ENCODE measurements at regions of chr9 and their contacts with region 1.

Region 1: GRCh38 chr9:6715755-6716643 is 41.8 kb upstream of the KDM4C start:
- DNase-seq: peak; percentile 71
- ATAC-seq: peak; percentile 86
- H3K4me3 Mint-ChIP-seq: peak overlapping the region; percentile 90
- H3K27ac Mint-ChIP-seq: peak overlapping the region; percentile 92
- H3K4me1 Mint-ChIP-seq: peaks cover 13% of the 10 kb centered on the region
- H3K27me3 Mint-ChIP-seq: no peaks in the 10 kb centered on the region
- CTCF ChIP-seq: no peak

Region 2: GRCh38 chr9:6686396-6686795 is 29.6 kb before region 1 on chr9:
- CTCF ChIA-PET with region 1: interaction called, 3 read pairs
- POLR2A ChIA-PET with region 1: interaction called, 53 read pairs
- intact Hi-C with region 1: loop called (anchors 1 kb)
- DNase-seq: no peak
- ATAC-seq: no peak
- H3K4me3 Mint-ChIP-seq: peak overlapping the region; percentile 50
- H3K27ac Mint-ChIP-seq: peak overlapping the region; percentile 84
- H3K4me1 Mint-ChIP-seq: peaks cover 75% of the 10 kb centered on the region
- H3K27me3 Mint-ChIP-seq: no peaks in the 10 kb centered on the region
- CTCF ChIP-seq: no peak

Region 3: DNA sequence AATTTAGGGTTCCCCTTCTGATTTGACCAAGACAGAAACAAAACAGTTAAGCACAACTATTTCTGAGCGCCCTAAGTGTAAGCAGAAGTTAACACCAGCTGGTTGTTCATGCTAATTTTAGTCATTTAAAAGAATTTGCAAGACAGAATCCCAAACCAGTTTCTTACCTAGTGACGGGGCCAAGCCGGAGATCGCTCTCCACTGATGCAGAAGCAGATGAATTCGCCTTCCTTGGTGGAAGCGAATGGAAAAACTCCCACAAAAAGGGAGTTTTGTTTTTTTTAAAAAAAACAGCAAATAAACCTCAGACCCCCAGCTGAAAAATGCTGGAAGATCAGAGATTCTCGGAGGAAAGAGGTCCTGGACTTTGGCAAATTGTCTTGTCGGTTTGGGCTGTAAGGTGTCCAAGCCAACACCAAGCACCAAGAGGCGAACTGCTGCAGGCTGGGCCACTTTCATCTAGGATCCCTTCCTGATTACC is 23.1 kb before region 1 on chr9:
- CTCF ChIA-PET with region 1: no interaction called
- POLR2A ChIA-PET with region 1: interaction called, 25 read pairs
- intact Hi-C with region 1: loop called (anchors 1 kb)
- DNase-seq: no peak
- ATAC-seq: peak; percentile 14
- H3K4me3 Mint-ChIP-seq: peak overlapping the region; percentile 74
- H3K27ac Mint-ChIP-seq: peak overlapping the region; percentile 95
- H3K4me1 Mint-ChIP-seq: peaks cover 79% of the 10 kb centered on the region
- H3K27me3 Mint-ChIP-seq: no peaks in the 10 kb centered on the region
- CTCF ChIP-seq: no peak

Region 4: GRCh38 chr9:6703898-6704639 is 11.9 kb before region 1 on chr9:
- CTCF ChIA-PET with region 1: no interaction called
- POLR2A ChIA-PET with region 1: interaction called, 15 read pairs
- intact Hi-C with region 1: loop called (anchors 1 kb)
- DNase-seq: peak; percentile 71
- ATAC-seq: peak; percentile 84
- H3K4me3 Mint-ChIP-seq: peak overlapping the region; percentile 93
- H3K27ac Mint-ChIP-seq: peak overlapping the region; percentile 98
- H3K4me1 Mint-ChIP-seq: peaks cover 22% of the 10 kb centered on the region
- H3K27me3 Mint-ChIP-seq: no peaks in the 10 kb centered on the region
- CTCF ChIP-seq: no peak

Measured in activated B cell treated with CpG ODN at 0.5 μM for 24 hours (primary cell).